ENCODE measurements at regions of chr14 and their contacts with region 1.

Region 1: DNA sequence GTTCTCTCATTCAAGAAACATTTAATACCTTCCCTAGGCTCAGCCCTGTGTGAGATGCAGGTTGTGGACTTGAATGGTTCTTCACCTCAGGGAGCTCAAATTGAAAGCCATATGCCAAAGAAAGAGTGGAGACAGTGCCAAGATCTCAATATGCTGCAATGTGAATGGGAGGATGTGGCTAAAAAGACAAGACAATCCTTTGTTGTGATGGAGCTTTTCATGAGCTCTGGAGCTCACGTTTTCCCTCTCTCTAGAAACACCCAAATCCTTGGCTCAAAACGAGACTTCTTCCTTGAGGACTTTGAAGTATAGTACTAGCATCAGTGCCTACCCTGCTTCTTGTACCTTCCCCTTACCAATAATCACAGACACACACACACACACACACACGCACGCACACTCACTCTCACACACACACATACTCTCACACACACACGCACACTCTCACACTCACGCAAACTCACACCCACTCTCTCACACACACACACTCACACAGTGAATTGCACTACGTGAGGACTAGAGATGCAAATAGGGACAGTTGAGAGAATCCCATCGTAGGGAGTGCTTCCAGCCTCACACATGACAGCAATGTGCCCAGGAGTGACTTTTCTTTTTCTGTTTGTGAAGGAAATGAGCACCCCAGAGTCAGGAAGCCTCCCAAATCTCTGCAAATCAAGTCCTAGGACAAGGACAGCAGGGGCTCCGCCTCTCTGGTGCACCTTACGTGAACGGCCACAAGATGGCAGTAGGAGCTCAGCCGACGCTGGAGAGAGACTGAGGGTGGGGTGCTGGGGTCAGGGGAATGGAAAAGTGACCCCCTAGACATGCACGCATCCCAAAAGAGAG is 231.4 kb downstream of the PCNX1 start:
- DNase-seq: peak; percentile 35 to 79 (median 50)
- ATAC-seq: peak; percentile 52
- H3K4me3 ChIP-seq: no peak overlapping the region
- H3K4me3 Mint-ChIP-seq: no peak overlapping the region
- H3K27ac ChIP-seq: no peak overlapping the region
- H3K27ac Mint-ChIP-seq: no peak overlapping the region
- H3K4me1 ChIP-seq: peaks cover 23% of the 10 kb centered on the region
- H3K4me1 Mint-ChIP-seq: peaks cover 16% of the 10 kb centered on the region
- H3K27me3 ChIP-seq: no peaks in the 10 kb centered on the region
- H3K27me3 Mint-ChIP-seq: no peaks in the 10 kb centered on the region
- CTCF ChIP-seq: peak; percentile 95

Region 2: DNA sequence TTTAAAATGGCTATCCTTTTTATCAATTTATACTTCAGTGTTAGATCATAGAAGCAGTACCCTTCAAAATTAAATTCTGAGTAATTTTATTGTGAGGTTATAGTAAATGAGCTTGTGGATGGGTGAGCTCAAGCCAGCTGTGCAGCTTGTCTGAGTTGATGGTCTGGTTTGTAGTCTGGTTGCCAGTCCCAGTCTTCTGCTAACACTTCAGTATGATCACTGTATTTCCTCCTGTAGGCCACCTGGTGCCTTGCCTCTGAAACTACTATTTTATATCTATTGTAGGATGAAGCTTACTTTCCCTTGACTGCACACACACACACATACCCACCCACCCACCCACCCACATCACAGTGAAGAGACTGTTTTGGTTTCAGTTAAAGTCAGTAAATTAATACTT is 265.0 kb after region 1 on chr14:
- CTCF ChIA-PET with region 1: interaction called, 3 read pairs
- POLR2A ChIA-PET with region 1: no interaction called
- intact Hi-C with region 1: loop called (anchors 2 to 10 kb)
- DNase-seq: peak in 6 of 14 experiments; percentile 7 to 62 (median 29)
- ATAC-seq: peak; percentile 48
- H3K4me3 ChIP-seq: no peak overlapping the region
- H3K4me3 Mint-ChIP-seq: no peak overlapping the region
- H3K27ac ChIP-seq: no peak overlapping the region
- H3K27ac Mint-ChIP-seq: peak overlapping the region; percentile 73
- H3K4me1 ChIP-seq: peaks cover 9% of the 10 kb centered on the region
- H3K4me1 Mint-ChIP-seq: peaks cover 27% of the 10 kb centered on the region
- H3K27me3 ChIP-seq: no peaks in the 10 kb centered on the region
- H3K27me3 Mint-ChIP-seq: no peaks in the 10 kb centered on the region
- CTCF ChIP-seq: no peak

Region 3: DNA sequence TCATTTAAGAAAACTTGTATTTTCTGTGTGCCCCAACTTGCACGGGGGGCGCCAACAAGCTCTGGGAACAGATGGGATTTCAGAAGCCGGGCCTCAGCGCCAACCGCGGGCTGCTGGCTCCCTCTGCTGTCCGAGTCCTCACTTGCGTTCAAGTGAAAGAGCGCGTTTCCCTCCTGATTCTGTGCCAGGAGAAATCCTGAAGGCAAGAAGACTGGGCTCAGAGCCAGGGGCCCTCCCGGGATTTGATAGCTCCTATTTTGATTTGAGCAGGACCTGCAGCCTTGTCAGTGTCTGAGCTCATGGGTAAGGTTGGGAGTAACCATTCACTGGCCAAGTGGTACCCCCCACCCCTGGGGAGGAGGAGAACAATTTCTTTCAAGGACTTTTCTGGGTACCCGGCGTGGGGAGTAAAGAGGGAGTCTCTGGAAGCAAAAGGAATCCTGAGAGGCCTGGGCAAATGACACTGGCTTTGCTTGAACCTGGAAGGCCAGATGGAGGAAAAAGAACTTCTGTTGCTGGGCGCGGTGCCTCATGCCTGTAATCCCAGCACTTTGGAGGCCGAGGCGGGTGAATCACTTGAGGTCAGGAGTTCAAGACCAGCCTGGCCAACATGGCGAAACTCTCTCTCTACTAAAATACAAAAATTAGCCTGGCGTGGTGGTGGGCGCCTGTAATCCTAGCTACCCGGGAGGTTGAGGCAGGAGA is 614.6 kb after region 1 on chr14:
- CTCF ChIA-PET with region 1: interaction called, 28 read pairs
- POLR2A ChIA-PET with region 1: no interaction called
- intact Hi-C with region 1: loop called (anchors 1 kb)
- DNase-seq: peak; percentile 47 to 81 (median 62)
- ATAC-seq: no peak
- H3K4me3 ChIP-seq: no peak overlapping the region
- H3K4me3 Mint-ChIP-seq: no peak overlapping the region
- H3K27ac ChIP-seq: no peak overlapping the region
- H3K27ac Mint-ChIP-seq: no peak overlapping the region
- H3K4me1 ChIP-seq: peaks cover 6% of the 10 kb centered on the region
- H3K4me1 Mint-ChIP-seq: no peaks in the 10 kb centered on the region
- H3K27me3 ChIP-seq: no peaks in the 10 kb centered on the region
- H3K27me3 Mint-ChIP-seq: peaks cover 6% of the 10 kb centered on the region
- CTCF ChIP-seq: peak; percentile 92

Region 4: DNA sequence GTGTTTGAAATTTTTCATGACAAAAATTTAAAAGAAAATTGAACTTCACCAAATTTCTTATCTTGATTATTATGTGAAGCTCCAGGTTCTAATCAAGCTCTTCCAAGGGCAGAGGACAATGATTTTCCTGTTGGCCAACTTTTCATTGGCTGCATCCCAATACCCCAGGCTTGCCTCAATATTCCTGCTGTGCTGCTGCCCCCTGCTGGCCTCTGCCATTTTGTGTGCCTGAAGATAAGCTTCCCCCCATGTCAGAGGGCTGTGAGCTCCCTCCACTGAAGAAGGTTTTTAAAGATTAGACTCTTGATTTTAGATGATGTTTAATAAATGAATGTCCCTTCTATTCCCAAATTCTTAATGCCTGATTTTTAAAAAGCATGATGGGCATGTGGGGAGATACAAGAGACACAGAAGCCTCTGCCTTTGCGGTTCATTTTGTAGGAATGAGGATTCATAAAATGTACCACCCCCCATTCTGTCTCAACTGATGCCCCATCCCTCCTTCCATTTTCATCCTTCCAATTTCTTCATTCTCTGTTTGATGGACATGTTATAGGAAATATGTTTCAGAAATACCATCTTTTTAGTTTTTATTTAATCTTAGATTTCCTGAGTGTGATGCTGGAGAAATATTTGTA is 716.8 kb after region 1 on chr14:
- CTCF ChIA-PET with region 1: no interaction called
- POLR2A ChIA-PET with region 1: no interaction called
- intact Hi-C with region 1: loop called in 1 of 2 experiments (anchors 2 kb)
- DNase-seq: peak in 12 of 14 experiments; percentile 4 to 50 (median 26)
- ATAC-seq: no peak
- H3K4me3 ChIP-seq: no peak overlapping the region
- H3K4me3 Mint-ChIP-seq: no peak overlapping the region
- H3K27ac ChIP-seq: no peak overlapping the region
- H3K27ac Mint-ChIP-seq: no peak overlapping the region
- H3K4me1 ChIP-seq: no peaks in the 10 kb centered on the region
- H3K4me1 Mint-ChIP-seq: no peaks in the 10 kb centered on the region
- H3K27me3 ChIP-seq: peaks cover 12 to 15% of the 10 kb centered on the region in 2 experiments
- H3K27me3 Mint-ChIP-seq: peaks cover 80% of the 10 kb centered on the region
- CTCF ChIP-seq: peak; percentile 54

Measured in CD4-positive, alpha-beta T cell (primary cell).